GM10248 (cell line): ENCODE measurements at regions of chr11 and their contacts with region 1.

Region 1: GRCh38 chr11:72609045-72609444 is 65.2 kb downstream of the PDE2A start:
- DNase-seq: peak; percentile 45
- CTCF ChIP-seq: peak; percentile 42

Region 2: DNA sequence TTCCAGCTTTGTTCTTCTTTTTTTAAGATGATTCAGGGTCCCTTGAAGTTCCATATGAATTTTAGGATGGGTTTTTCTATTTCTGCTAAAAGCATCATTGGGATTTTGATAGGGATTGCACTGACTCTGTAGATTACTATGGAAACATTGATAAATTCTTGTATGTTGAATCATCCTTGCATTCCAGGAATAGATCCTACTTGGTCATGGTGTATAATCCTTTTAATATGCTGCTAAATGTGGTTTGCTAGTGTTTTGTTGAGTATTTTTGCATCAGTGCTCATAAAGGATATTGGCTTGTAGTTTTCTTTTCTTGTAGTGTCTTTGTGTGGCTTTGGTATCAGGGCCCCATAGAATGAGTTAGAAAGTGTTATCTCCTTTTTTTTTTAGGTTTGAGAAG is 330.1 kb before region 1 on chr11:
- CTCF ChIA-PET with region 1: no interaction called
- POLR2A ChIA-PET with region 1: no interaction called
- DNase-seq: no peak
- CTCF ChIP-seq: no peak

Region 3: GRCh38 chr11:72561856-72562255 is 47.2 kb before region 1 on chr11:
- CTCF ChIA-PET with region 1: no interaction called
- POLR2A ChIA-PET with region 1: no interaction called
- DNase-seq: no peak
- CTCF ChIP-seq: no peak

Region 4: DNA sequence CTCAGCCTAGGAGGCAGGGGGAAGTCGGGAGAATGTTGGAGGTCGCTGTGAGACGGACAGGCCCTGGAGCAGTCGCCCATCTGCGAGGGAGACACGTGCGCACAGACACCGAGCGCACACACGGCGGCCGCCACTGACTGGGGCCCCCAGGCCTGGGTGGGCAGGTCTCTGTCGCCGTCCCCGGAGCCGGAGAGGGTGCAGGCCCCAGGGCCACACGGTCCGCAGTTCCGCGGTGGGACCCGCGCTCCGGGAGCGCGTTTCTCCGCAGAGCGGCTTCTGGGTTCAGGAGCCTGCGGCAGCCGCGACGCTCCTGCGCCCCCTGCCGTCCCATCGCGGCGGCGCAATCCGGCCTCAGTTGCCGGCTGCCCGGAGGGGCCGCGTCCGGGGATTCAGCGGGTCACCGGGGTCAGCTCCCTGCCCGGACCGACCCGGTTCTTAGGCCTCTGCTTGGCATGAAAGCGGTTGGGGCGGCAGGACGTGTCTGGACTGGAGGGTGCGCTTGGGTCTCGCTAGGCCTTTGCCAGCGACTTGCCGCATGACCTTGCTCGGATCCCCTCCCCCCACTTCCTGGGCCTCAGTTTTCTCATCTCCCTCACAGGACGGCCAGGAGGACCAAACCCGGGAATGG is 34.0 kb after region 1 on chr11:
- CTCF ChIA-PET with region 1: interaction called, 15 read pairs
- POLR2A ChIA-PET with region 1: no interaction called
- DNase-seq: peak; percentile 90
- CTCF ChIP-seq: peak; percentile 83

Region 5: DNA sequence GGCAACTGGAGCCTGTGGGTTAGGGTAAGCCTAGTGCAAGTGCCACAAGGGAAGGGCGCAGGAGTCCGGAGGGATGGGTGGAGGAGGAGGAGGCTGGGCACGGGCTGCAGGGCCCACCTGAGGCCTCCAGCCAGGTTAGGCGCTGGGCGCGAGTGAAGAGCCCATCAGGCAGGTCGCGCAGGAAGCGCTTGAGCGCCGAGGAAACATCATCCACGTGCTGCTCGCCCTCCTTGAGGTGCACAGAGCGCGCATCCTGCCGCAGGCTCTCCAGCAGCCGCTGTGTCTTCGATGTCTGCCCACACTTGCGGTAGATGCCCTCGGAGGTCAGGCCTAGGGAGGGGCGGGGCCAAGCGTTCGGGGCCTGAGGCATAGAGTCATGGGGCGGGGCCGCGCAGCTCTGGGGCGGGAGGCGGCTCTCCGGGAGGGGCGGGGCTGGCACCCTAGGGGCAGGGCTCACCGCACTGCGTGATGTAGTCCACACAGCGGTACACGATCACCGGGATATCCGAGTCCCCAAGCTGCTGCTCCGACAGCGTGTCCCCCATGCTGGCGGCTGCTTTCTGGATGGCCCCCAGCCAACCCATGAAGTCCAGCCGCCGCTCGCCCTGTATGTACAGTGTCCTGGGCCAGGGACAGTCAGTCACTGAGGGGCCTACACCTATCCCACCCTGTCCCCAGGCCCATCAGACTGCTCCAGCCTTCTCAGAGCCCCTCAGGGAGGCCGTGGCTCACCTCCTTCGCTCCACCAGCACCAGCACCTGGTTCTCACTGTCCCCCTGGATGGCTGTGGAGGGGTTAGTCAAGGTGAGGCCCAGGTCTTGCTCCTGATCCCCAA is 88.0 kb after region 1 on chr11:
- CTCF ChIA-PET with region 1: no interaction called
- POLR2A ChIA-PET with region 1: interaction called, 10 read pairs
- DNase-seq: no peak
- CTCF ChIP-seq: no peak

Region 6: DNA sequence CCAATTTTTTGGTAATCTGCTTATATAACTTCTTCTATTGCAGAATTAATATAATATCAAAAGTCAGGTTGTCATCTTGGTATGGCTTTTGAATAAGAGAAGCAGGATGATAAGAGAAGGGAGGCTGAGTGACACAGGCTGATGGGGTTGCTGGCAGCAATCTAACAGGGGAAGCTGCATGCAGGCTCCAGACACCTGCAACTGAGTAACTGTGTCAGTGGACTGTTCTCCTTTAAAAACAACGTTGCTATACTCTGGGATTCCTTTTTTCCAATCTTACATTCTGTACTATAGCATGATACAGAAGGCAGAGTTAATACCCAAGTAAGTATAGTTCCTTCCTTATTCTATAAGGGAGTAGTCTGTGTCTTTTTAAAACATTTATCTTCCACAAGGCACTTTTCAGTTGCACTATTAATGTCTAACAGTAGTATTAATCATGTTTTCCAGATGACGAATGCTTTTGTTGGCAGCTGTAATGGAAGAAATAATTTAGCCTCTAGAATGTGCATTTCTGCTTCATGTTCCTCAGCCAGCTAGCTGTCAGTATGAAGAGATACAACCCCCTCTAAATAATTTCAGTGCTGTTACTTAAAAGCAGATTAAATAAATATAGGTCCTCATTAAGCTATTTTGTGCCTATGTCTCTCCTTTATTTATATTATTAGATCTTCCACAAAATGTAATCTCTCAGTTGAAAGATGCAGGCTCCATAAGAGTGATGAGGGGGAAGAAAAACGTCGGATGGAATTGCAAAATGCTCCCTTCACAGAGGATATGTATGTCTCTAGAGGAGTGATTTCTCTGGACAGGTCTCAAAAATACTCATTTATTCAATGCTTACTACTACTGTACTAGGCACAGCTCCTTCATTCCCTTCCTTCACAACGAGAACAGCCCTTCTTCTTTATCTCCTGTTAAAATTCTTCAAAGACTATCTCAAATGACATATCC is 255.9 kb after region 1 on chr11:
- CTCF ChIA-PET with region 1: no interaction called
- POLR2A ChIA-PET with region 1: no interaction called
- DNase-seq: no peak
- CTCF ChIP-seq: no peak